Activated CD4-positive, alpha-beta T cell treated with anti-CD3 and anti-CD28 coated beads for 36 hours (primary cell): ENCODE measurements at regions of chr9 and their contacts with region 1.

Region 1: GRCh38 chr9:120761011-120761410 is 32.2 kb downstream of the FBXW2 start:
- DNase-seq: no peak
- ATAC-seq: no peak
- H3K4me3 Mint-ChIP-seq: no peak overlapping the region
- H3K27ac Mint-ChIP-seq: no peak overlapping the region
- H3K4me1 Mint-ChIP-seq: peaks cover 26% of the 10 kb centered on the region
- H3K27me3 Mint-ChIP-seq: no peaks in the 10 kb centered on the region

Region 2: GRCh38 chr9:120773256-120773655 is 12.2 kb after region 1 on chr9:
- CTCF ChIA-PET with region 1: interaction called, 31 read pairs
- POLR2A ChIA-PET with region 1: interaction called, 4 read pairs
- intact Hi-C with region 1: no loop called
- DNase-seq: no peak
- ATAC-seq: no peak
- H3K4me3 Mint-ChIP-seq: no peak overlapping the region
- H3K27ac Mint-ChIP-seq: no peak overlapping the region
- H3K4me1 Mint-ChIP-seq: peaks cover 6% of the 10 kb centered on the region
- H3K27me3 Mint-ChIP-seq: no peaks in the 10 kb centered on the region